Pancreas (tissue), 10 donors: ENCODE measurements at regions of chr5 and their contacts with region 1.

Region 1: GRCh38 chr5:139787568-139788293 is 7.9 kb upstream of the PSD2 start:
- DNase-seq: peak; percentile 79 to 98 (median 89)
- ATAC-seq: peak; percentile 91 to 97 (median 94)
- H3K4me3 ChIP-seq: peak overlapping the region; percentile 26 to 63 (median 40)
- H3K27ac ChIP-seq: no peak overlapping the region
- H3K4me1 ChIP-seq: no peaks in the 10 kb centered on the region
- H3K27me3 ChIP-seq: no peaks in the 10 kb centered on the region
- CTCF ChIP-seq: peak; percentile 89 to 98 (median 97)

Region 2: GRCh38 chr5:138884546-138884945 is 903.2 kb before region 1 on chr5:
- intact Hi-C with region 1: no loop called
- DNase-seq: no peak
- ATAC-seq: peak in 1 of 4 donors; percentile 37
- H3K4me3 ChIP-seq: no peak overlapping the region
- H3K27ac ChIP-seq: no peak overlapping the region
- H3K4me1 ChIP-seq: peaks cover 3 to 11% (median 4%) of the 10 kb centered on the region in 3 donors
- H3K27me3 ChIP-seq: no peaks in the 10 kb centered on the region
- CTCF ChIP-seq: no peak

Region 3: GRCh38 chr5:139468421-139468931 is 319.3 kb before region 1 on chr5:
- intact Hi-C with region 1: no loop called
- DNase-seq: peak in 1 of 6 donors; percentile 10
- ATAC-seq: peak in 1 of 4 donors; percentile 28
- H3K4me3 ChIP-seq: no peak overlapping the region
- H3K27ac ChIP-seq: no peak overlapping the region
- H3K4me1 ChIP-seq: no peaks in the 10 kb centered on the region
- H3K27me3 ChIP-seq: no peaks in the 10 kb centered on the region
- CTCF ChIP-seq: no peak

Region 4: DNA sequence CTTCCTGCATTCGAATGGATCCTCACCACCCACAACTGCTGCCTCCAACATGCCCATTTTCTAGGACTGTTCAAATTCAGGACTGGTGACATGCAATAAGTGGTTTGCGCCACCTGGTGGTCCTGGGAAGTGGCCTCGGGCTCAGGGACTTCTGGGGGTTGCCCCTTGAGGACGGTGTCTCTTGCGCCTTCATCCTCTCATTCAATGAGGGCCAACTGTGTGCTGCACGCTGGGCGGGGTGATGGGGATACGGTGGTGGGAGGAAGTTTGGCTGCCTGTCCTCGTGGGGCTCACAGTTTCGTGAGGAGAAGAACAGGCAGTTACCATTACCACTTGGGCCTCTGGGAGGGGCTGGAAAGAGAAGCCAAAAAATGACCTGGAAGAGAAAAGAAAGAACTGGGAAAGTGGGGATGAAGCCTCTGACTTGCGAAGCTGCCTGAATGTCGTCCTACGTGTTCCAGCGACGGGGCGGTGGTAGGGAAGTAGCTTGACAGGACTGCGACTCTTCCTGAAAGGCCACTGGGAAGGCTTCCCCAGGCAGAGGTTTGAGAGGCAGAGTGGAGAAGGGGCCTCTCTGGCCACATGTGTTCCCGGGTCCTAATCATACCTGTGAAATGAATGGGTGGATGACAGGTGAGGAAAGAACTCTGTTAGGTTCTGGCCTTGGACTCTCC is 56.9 kb after region 1 on chr5:
- intact Hi-C with region 1: loop called in 1 of 3 experiments (anchors 5 kb)
- DNase-seq: peak; percentile 53 to 86 (median 74)
- ATAC-seq: peak in 3 of 4 donors; percentile 23 to 57 (median 56)
- H3K4me3 ChIP-seq: no peak overlapping the region
- H3K27ac ChIP-seq: no peak overlapping the region
- H3K4me1 ChIP-seq: peaks cover 0 to 4% (median 0%) of the 10 kb centered on the region in 3 donors
- H3K27me3 ChIP-seq: no peaks in the 10 kb centered on the region
- CTCF ChIP-seq: peak; percentile 20 to 63 (median 45)

Region 5: DNA sequence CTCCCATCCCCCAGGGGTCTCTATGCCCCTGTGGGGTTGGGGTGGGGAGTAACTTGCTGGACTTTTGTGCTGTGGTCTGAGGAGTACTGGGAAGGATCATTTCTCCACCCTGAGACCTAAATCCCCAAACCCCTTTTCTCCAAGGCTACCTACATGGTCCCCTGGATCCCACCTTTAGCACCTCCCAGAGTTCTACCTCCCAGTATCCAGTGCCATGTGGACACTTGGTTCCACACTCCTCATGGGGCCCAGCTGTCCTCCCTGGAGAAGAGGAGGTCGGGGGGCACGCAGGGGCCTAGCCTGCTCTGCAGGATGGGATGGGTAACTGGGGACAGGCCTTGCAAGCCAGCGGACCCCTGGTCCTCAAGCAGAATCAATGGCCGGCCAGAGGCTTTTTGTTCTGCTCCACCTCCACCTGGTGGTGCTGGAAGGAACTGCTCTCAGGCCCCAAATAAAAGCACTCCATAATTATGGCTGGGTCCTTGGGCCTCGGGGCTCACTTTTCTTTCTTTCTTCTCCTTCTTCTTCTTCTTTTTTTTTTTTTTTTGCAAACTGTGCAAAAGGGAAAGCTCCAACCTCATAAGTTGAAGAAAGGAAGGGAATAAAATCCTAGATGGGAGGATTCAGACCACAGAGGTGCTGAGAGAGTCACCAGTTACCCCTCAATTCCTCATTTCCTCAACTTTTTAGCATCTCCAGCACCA is 76.3 kb after region 1 on chr5:
- intact Hi-C with region 1: loop called in 2 of 3 experiments (anchors 5 kb)
- DNase-seq: peak in 5 of 6 donors; percentile 27 to 82 (median 65)
- ATAC-seq: peak; percentile 78 to 92 (median 86)
- H3K4me3 ChIP-seq: no peak overlapping the region
- H3K27ac ChIP-seq: no peak overlapping the region
- H3K4me1 ChIP-seq: no peaks in the 10 kb centered on the region
- H3K27me3 ChIP-seq: no peaks in the 10 kb centered on the region
- CTCF ChIP-seq: peak; percentile 66 to 89 (median 88)

Region 6: GRCh38 chr5:139869042-139869790 is 81.5 kb after region 1 on chr5:
- intact Hi-C with region 1: loop called in 2 of 3 experiments (anchors 5 kb)
- DNase-seq: no peak
- ATAC-seq: peak in 2 of 4 donors; percentile 21 to 53
- H3K4me3 ChIP-seq: no peak overlapping the region
- H3K27ac ChIP-seq: peak overlapping the region in 3 of 4 donors; percentile 49 to 73 (median 58)
- H3K4me1 ChIP-seq: no peaks in the 10 kb centered on the region
- H3K27me3 ChIP-seq: no peaks in the 10 kb centered on the region
- CTCF ChIP-seq: no peak

Region 7: DNA sequence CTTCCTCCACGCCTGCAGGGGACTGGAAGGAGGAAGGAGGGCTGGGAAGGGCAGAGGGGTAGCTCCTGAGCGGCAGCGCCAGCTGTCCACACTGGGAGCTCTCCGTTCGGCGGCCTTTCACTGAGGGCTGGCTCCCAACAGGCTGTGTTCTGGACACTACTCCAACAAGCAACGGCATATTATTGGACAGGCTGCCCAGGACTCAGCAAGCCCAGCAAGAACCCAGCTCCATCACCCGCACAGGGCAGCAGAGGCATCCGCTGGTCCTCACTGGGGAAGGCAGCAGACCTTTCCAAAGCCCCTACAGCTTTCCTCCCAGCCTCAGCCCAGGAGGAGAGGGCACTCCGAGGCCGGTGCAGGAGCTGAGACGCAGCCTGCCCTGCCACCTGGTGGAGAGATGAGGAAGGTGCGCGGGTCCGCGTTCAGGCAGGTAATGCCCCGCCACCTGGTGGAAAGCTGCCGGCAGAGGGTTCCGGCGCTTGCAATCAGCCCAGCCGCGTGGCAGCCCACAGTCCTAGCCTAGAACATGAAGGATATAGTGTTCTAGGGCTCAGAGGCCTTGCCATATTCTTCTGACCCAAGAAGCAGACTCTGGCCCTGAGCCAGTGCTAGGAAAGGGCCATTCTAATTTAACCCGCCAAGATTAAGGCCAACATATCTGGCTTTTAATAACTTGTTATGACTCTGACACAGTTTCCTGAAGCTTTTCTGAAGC is 181.0 kb after region 1 on chr5:
- intact Hi-C with region 1: loop called in 2 of 3 experiments (anchors 5 kb)
- DNase-seq: peak; percentile 81 to 98 (median 94)
- ATAC-seq: peak; percentile 97 to 100 (median 100)
- H3K4me3 ChIP-seq: no peak overlapping the region
- H3K27ac ChIP-seq: no peak overlapping the region
- H3K4me1 ChIP-seq: peaks cover 0 to 8% (median 3%) of the 10 kb centered on the region in 3 donors
- H3K27me3 ChIP-seq: no peaks in the 10 kb centered on the region
- CTCF ChIP-seq: peak; percentile 98 to 100 (median 98)

Region 8: GRCh38 chr5:140157032-140157803 is 369.5 kb after region 1 on chr5:
- intact Hi-C with region 1: loop called in 1 of 3 experiments (anchors 10 kb)
- DNase-seq: peak; percentile 83 to 95 (median 91)
- ATAC-seq: peak; percentile 95 to 99 (median 98)
- H3K4me3 ChIP-seq: peak overlapping the region in 2 of 4 donors; percentile 1 to 29
- H3K27ac ChIP-seq: peak overlapping the region in 2 of 4 donors; percentile 19 to 41
- H3K4me1 ChIP-seq: peaks cover 0 to 6% (median 0%) of the 10 kb centered on the region in 3 donors
- H3K27me3 ChIP-seq: no peaks in the 10 kb centered on the region
- CTCF ChIP-seq: peak; percentile 81 to 90 (median 84)